Activated CD8-positive, alpha-beta T cell treated with anti-CD3 and anti-CD28 coated beads for 36 hours (primary cell): ENCODE measurements at regions of chrX and their contacts with region 1.

Region 1: DNA sequence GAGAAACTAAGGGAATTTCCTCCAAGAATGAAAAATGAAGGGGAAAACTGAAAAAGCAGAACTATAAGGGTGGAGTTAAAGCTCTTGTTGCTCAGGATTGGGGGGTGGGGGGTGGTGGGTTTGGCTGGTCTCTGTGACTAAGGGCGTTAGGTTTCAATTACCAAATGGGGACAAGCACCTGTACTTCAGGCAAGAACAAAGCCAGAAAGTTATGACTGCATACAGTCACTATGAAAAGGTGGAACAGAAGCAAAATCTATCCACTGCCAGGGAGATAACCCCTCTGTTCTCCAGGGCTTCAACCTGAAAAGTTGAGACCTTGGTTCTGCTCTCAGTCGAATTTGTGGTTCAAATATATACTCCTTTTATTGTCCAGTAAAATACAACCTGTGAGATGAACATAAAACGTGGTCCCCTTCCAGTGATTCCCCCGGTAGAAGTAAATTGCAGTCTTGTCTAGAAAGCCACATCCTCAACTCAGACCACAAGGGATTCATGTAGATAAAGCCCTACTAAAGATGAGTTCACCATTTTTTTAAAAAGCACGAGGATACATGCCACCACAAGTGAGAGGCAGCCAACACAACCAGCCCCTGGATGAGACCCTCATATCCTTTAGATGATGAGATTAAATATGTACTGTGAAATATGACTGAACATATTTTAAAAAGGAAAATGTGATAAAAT is 257.1 kb upstream of the RPS6KA3 start:
- DNase-seq: peak; percentile 40
- ATAC-seq: peak; percentile 75
- H3K4me3 Mint-ChIP-seq: no peak overlapping the region
- H3K27ac Mint-ChIP-seq: peak overlapping the region; percentile 52
- H3K4me1 Mint-ChIP-seq: peaks cover 18% of the 10 kb centered on the region
- H3K27me3 Mint-ChIP-seq: peaks cover 7% of the 10 kb centered on the region
- CTCF ChIP-seq: no peak

Region 2: GRCh38 chrX:20595928-20596575 is 72.3 kb after region 1 on chrX:
- CTCF ChIA-PET with region 1: no interaction called
- POLR2A ChIA-PET with region 1: no interaction called
- intact Hi-C with region 1: loop called (anchors 2 kb)
- DNase-seq: peak; percentile 74
- ATAC-seq: peak; percentile 90
- H3K4me3 Mint-ChIP-seq: no peak overlapping the region
- H3K27ac Mint-ChIP-seq: peak overlapping the region; percentile 80
- H3K4me1 Mint-ChIP-seq: peaks cover 21% of the 10 kb centered on the region
- H3K27me3 Mint-ChIP-seq: peaks cover 1% of the 10 kb centered on the region
- CTCF ChIP-seq: no peak